ENCODE measurements at regions of chr7 and their contacts with region 1.

Region 1: DNA sequence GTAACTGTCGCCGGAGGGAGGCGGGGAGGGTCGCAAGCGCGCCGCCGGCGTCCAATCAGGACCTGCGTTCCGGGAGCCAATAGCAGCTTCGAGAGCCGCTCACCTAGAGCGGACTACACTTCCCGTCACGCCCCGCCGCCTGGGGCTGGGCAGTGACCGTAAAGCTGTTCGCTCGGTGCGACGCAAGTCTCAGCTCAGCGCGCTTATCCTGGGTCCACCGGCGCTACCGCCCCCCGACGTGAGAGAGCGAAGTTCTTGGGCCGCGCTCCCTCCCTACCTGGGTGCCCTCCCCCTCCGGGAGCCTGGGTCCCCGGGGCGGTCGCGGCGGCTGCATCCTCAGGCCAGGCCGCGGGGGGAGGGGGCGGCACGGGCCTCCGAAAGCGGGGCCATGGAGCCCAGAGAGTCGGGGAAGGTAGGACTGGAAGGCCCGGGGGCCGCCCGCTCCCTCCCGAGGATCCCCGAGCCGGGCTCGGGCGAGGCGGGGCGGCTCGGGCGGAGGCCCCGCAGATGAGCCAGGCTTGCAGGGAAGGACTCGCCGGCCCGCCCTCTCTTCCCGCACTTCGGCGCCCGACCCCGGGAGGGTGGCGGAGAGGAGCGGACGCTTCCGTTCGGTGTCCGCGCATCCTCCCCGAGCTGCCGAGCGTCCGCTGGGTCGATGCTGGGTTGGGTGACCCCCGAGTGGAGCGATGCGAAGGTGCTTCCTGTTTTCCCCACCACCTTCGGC is at the start of gene ZNF862:
- DNase-seq: peak; percentile 97 to 98
- ATAC-seq: peak; percentile 98 to 99
- H3K4me3 ChIP-seq: peak within 1 kb of the TSS; percentile 76 to 99 (median 87)
- H3K27ac ChIP-seq: peak within 1 kb of the TSS; percentile 80 to 95 (median 90)
- H3K4me1 ChIP-seq: peaks cover 23 to 24% of the 10 kb centered on the region in 2 donors
- H3K27me3 ChIP-seq: no peaks in the 10 kb centered on the region
- CTCF ChIP-seq: no peak
- POLR2A ChIP-seq: peak; percentile 62 to 85
- total RNA-seq, gene ZNF862: 2.9 to 10.7 (median 7.0) TPM

Region 2: DNA sequence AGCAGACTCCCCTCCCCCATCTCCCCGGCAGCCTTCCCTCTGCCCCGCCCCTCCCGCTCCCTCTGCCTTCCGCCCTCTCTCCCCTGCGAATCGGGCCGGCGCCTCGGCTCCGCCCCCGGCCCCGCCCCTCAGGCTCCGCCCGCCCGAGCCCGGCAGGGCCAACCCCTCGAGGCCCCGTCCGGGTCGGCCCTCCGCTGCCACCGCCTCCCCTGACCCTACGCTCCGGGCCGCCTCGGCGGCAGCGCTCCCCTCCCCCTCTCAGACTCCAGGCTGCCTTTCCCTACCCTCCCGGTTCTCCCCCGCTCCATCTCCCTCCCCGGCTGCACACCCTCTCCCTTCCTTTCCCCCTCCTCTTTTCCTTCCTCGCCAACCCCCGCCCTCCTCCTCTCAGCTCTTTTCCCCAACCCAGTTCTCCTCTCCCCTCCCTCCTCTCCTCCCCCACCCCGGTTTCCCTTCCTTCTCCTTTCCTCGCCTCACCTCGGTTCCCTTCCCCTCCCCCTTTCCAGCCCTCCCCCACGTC is 66.6 kb before region 1 on chr7:
- in situ Hi-C with region 1: no loop called
- intact Hi-C with region 1: loop called (anchors 1 kb)
- DNase-seq: peak; percentile 78 to 83
- ATAC-seq: peak; percentile 90 to 91
- H3K4me3 ChIP-seq: peak overlapping the region; percentile 71 to 83 (median 74)
- H3K27ac ChIP-seq: peak overlapping the region; percentile 50 to 67 (median 58)
- H3K4me1 ChIP-seq: peaks cover 5 to 23% of the 10 kb centered on the region in 2 donors
- H3K27me3 ChIP-seq: peaks cover 8 to 13% (median 9%) of the 10 kb centered on the region in 3 donors
- CTCF ChIP-seq: no peak
- POLR2A ChIP-seq: peak in 1 of 2 donors; percentile 24

Region 3: DNA sequence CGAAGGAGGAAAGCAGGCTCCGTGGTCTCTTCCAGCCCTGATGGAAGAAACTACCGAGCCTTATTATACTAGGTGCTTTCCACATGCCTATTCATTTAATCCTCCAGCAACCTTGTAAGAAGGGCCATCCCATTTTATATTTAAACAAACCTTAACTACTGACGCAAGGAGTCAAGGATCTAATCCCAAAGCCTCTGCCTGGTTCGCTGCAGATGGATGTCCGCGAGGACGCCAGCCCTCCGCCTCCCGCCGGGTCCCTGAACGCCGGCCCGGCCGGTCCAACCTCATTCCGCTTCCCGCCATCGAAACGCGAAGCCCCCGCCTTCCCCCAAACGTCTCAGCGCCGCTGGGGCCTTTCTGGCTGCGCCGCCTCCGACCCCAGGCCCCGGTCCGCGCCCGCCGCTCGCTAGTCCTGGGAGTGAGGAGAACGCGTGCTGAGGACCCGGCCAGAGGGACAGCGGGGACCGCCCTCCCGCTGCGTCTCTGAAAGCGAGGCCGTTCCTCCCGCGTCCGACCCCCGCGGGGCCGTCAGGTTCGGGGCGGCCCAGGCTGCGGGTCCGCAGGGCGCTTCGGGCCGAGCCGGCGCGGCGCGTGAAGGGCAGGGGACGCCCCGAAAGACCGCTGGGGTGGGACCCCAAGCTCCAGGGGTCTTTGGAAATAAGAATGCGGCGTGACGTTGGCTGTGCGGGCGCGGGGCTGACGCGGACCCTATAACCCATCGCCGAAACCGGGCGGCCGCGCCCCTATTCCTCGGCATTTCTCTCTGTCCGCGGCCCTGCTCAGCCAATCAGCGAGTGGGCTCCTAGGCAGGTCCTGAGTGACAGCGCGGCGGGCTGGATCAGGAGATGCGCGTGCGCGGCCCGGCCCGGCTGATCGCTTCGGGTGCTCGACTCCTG is 34.9 kb after region 1 on chr7 and contains the start of gene ATP6V0E2:
- in situ Hi-C with region 1: no loop called
- intact Hi-C with region 1: loop called (anchors 1 kb)
- DNase-seq: peak; percentile 95
- ATAC-seq: peak; percentile 91 to 92
- H3K4me3 ChIP-seq: peak within 1 kb of the TSS; percentile 71 to 84 (median 73)
- H3K27ac ChIP-seq: peak within 1 kb of the TSS; percentile 86 to 88 (median 87)
- H3K4me1 ChIP-seq: peaks cover 13 to 14% of the 10 kb centered on the region in 2 donors
- H3K27me3 ChIP-seq: no peaks in the 10 kb centered on the region
- CTCF ChIP-seq: peak in 2 of 5 experiments; percentile 5 to 9
- POLR2A ChIP-seq: peak; percentile 80 to 82
- total RNA-seq, gene ATP6V0E2: 9.0 to 46.3 (median 12.9) TPM